HAP-1 (cell line): ENCODE measurements at regions of chr1 and their contacts with region 1.

Region 1: DNA sequence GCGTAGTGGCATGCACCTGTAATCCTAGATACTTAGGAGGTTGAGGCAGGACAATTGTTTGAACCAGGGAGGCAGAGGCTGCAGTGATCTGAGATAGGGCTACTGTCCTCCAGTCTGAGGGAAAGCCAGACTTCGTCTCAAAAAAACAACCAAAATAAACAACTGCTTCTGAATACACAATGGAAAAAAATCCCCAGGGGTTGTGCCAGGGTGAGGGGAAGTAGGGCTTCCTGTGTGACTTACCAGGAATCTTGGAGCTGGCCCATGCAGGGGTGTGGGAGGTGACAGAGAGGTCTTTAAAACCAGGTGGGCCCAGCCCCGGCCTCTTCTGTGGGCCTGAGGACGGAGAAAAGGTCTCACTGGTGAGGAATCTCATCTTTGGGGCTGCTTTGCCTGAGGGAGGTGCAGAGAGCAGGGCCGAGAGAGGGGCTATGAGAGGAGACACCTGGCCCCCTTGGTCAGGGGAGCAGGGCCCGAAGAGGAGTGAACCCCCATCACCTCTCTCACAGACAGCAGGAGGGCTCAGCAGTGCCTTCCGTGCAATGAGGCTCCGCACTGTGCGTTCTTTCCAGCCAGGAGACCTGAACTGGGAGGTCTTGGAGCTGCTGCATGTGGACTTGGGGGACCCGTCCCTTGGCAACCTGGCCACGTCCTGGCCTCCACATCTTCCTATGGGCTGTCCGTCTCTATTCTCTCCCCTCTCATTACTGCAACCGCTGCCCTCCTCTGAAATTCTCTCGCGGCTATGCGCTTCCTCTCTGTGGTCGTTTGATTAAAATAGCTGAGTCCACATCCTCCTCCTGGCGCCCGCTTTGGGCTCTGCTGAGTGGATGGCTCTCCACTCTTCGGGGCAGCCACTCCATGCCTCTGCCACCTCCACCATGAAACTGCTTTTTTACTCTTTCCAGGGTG is 10.7 kb downstream of the PLA2G5 start:
- DNase-seq: no peak
- H3K4me3 ChIP-seq: no peak overlapping the region
- H3K4me1 ChIP-seq: no peaks in the 10 kb centered on the region
- H3K27me3 ChIP-seq: no peaks in the 10 kb centered on the region

Region 2: DNA sequence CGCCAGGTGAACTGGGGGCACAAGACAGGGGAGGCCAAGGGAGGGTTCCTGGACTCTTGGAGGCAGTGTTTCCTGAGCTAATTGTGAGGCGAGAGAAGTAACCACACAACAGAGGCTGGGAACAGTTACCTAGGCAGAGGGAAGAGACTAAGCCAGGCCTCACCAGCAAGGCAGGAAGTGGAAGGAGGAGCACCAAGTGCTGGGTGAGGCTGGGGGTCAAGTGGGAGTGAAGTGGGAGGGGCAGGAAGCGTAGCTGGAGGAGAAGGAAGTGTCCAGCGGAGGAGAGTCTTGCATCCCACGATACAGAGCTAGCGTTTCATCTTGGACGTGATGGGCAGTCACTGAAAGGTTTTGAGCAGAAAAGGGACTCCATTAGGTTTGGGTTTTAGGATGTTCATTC is 547.1 kb before region 1 on chr1:
- in situ Hi-C with region 1: loop called (anchors 25 kb)
- DNase-seq: no peak
- H3K4me3 ChIP-seq: no peak overlapping the region
- H3K4me1 ChIP-seq: no peaks in the 10 kb centered on the region
- H3K27me3 ChIP-seq: no peaks in the 10 kb centered on the region

Region 3: GRCh38 chr1:20165522-20165951 is 84.8 kb after region 1 on chr1:
- in situ Hi-C with region 1: no loop called
- DNase-seq: peak in 1 of 2 experiments; percentile 6
- H3K4me3 ChIP-seq: no peak overlapping the region
- H3K4me1 ChIP-seq: no peaks in the 10 kb centered on the region
- H3K27me3 ChIP-seq: peaks cover 11% of the 10 kb centered on the region